Breast epithelium (tissue), 4 donors: ENCODE measurements at regions of chr19 and their contacts with region 1.

Region 1: GRCh38 chr19:47697863-47698609 is 15.2 kb upstream of the EHD2 start:
- DNase-seq: peak; percentile 60 to 84
- H3K4me3 ChIP-seq: no peak overlapping the region
- H3K27ac ChIP-seq: peak overlapping the region; percentile 72 to 80
- H3K4me1 ChIP-seq: no peaks in the 10 kb centered on the region
- H3K27me3 ChIP-seq: no peaks in the 10 kb centered on the region
- CTCF ChIP-seq: peak; percentile 95 to 99 (median 98)
- POLR2A ChIP-seq: no peak

Region 2: DNA sequence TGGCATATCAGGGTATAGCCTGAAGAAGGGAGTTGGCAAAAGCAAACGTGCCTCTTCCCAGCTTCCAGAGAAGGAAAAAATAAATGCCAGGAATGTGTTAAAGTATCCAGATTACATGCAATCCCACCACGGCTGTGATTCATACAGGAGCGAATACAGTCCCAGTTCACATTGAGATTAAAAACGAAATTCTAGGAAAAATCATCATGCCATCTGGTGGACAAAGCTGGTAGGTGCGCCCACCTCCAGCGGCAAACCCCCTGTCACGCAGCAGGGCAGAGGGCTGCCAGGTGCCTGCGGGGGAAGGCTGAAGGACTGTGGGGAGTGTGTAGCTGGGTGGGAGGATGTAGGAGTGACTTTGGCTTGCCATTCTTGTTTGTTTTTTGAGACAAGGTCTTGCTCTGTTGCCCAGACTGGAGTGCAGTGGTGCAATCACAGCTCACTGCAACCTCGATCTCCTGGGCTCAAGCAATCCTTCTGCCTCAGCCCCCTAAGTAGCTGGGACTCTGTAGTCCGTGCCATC is 1899.0 kb before region 1 on chr19:
- intact Hi-C with region 1: loop called (anchors 5 kb)
- DNase-seq: no peak
- H3K4me3 ChIP-seq: no peak overlapping the region
- H3K27ac ChIP-seq: peak overlapping the region in 1 of 2 donors; percentile 27
- H3K4me1 ChIP-seq: no peaks in the 10 kb centered on the region
- H3K27me3 ChIP-seq: no peaks in the 10 kb centered on the region
- CTCF ChIP-seq: peak; percentile 93 to 94 (median 94)
- POLR2A ChIP-seq: no peak

Region 3: GRCh38 chr19:47745010-47745901 is 47.2 kb after region 1 on chr19 and contains the start of gene NOP53:
- intact Hi-C with region 1: no loop called
- DNase-seq: peak; percentile 98
- H3K4me3 ChIP-seq: peak within 1 kb of the TSS; percentile 77 to 82 (median 82)
- H3K27ac ChIP-seq: peak within 1 kb of the TSS; percentile 99
- H3K4me1 ChIP-seq: peaks cover 0 to 15% of the 10 kb centered on the region in 2 donors
- H3K27me3 ChIP-seq: no peaks in the 10 kb centered on the region
- CTCF ChIP-seq: peak in 2 of 3 donors; percentile 23 to 42
- POLR2A ChIP-seq: peak; percentile 76
- total RNA-seq, gene NOP53: 391 to 498 (median 457) TPM

Region 4: GRCh38 chr19:49118565-49119410 is 1420.8 kb after region 1 on chr19 and contains the start of gene C19orf73:
- intact Hi-C with region 1: loop called (anchors 5 kb)
- DNase-seq: peak; percentile 93 to 97
- H3K4me3 ChIP-seq: peak within 1 kb of the TSS; percentile 52 to 73 (median 65)
- H3K27ac ChIP-seq: peak within 1 kb of the TSS; percentile 97 to 98
- H3K4me1 ChIP-seq: peaks cover 0 to 14% of the 10 kb centered on the region in 2 donors
- H3K27me3 ChIP-seq: no peaks in the 10 kb centered on the region
- CTCF ChIP-seq: peak; percentile 10 to 63 (median 23)
- POLR2A ChIP-seq: peak; percentile 28
- total RNA-seq, gene C19orf73: 3.8 to 5.7 (median 4.6) TPM